ENCODE measurements at regions of chr2 and their contacts with region 1.

Region 1: GRCh38 chr2:36663851-36664695 is 32.4 kb upstream of the VIT start:
- DNase-seq: peak; percentile 31
- CTCF ChIP-seq: peak; percentile 69

Region 2: GRCh38 chr2:36355151-36355889 is 308.8 kb before region 1 on chr2 and contains the start of gene CRIM1:
- in situ Hi-C with region 1: loop called (anchors 25 kb)
- DNase-seq: peak; percentile 73
- CTCF ChIP-seq: no peak

Region 3: DNA sequence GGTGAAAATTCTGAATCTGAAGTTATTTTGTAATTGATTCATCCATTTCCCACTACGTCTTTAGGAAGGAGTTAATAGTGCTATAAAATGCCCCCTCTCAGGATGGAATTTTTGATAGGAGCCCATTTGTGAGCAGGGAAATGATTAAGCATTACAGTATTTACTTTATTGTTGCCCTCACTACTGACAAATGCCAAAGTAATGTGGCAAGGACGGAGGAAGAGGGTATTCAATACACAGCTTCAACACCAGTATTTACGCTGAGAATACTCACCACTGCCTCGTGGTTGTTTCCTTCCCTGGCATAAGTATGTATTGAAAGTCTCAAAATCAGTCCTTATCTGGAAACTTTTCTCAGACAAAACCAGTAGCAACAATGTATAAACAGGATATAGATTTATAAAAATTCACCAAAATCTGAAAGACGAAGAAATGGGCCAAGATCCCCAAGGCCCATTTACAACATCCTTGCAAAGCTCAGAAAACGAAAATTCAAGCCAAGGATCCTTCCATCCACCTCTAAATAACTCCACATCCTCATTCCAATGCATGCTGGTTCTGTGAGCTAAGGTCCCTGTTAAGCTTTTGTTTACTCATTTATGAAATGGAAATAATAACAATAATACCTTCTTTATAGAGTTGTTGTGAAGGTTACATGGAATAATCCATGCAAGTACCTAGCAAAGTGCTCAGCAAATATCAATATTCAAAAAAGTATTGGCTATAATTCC is 95.4 kb before region 1 on chr2:
- in situ Hi-C with region 1: no loop called
- DNase-seq: no peak
- CTCF ChIP-seq: no peak